CD14-positive monocyte (primary cell): ENCODE measurements at regions of chr2 and their contacts with region 1.

Region 1: DNA sequence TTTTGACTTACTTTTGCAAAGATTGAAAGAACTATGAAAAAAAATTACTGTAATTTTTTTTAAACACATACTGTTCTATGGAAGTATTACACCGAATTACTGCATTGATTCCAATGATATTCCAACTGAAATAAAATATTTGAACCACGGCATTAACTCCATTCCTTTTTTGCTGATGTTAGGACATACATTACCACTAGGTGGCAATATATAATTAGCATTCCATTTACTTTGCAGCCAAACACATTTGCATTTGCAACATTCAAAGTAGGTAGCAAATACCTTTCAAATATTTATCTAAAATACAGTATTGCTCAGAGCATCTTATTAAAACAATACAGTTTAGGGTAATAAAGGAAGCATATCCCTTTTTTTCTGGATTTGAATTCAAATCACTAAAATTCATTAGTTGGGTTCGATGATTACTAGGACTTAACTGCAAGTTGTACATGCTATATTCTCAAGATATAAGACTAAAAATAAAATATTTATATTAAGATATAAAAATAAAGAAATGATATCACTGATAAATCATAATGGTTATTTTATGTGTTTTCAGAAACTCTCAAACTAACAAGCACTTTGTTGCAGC is 31.3 kb downstream of the LANCL1 start:
- DNase-seq: peak in 2 of 3 donors; percentile 2 to 20
- H3K4me3 ChIP-seq: no peak overlapping the region
- H3K4me3 Mint-ChIP-seq: no peak overlapping the region
- H3K27ac ChIP-seq: no peak overlapping the region
- H3K27ac Mint-ChIP-seq: no peak overlapping the region
- H3K4me1 ChIP-seq: peaks cover 6 to 10% of the 10 kb centered on the region in 2 donors
- H3K4me1 Mint-ChIP-seq: peaks cover 13% of the 10 kb centered on the region
- H3K27me3 ChIP-seq: no peaks in the 10 kb centered on the region
- H3K27me3 Mint-ChIP-seq: peaks cover 0 to 3% (median 0%) of the 10 kb centered on the region in 3 donors
- CTCF ChIP-seq: peak; percentile 90

Region 2: GRCh38 chr2:211161236-211161635 is 716.0 kb after region 1 on chr2:
- intact Hi-C with region 1: loop called in 1 of 2 experiments (anchors 10 kb)
- DNase-seq: no peak
- H3K4me3 ChIP-seq: no peak overlapping the region
- H3K4me3 Mint-ChIP-seq: no peak overlapping the region
- H3K27ac ChIP-seq: no peak overlapping the region
- H3K27ac Mint-ChIP-seq: no peak overlapping the region
- H3K4me1 ChIP-seq: no peaks in the 10 kb centered on the region
- H3K4me1 Mint-ChIP-seq: no peaks in the 10 kb centered on the region
- H3K27me3 ChIP-seq: no peaks in the 10 kb centered on the region
- H3K27me3 Mint-ChIP-seq: peaks cover 0 to 1% (median 0%) of the 10 kb centered on the region in 3 donors
- CTCF ChIP-seq: no peak